ENCODE measurements at regions of chr5 and their contacts with region 1.

Region 1: DNA sequence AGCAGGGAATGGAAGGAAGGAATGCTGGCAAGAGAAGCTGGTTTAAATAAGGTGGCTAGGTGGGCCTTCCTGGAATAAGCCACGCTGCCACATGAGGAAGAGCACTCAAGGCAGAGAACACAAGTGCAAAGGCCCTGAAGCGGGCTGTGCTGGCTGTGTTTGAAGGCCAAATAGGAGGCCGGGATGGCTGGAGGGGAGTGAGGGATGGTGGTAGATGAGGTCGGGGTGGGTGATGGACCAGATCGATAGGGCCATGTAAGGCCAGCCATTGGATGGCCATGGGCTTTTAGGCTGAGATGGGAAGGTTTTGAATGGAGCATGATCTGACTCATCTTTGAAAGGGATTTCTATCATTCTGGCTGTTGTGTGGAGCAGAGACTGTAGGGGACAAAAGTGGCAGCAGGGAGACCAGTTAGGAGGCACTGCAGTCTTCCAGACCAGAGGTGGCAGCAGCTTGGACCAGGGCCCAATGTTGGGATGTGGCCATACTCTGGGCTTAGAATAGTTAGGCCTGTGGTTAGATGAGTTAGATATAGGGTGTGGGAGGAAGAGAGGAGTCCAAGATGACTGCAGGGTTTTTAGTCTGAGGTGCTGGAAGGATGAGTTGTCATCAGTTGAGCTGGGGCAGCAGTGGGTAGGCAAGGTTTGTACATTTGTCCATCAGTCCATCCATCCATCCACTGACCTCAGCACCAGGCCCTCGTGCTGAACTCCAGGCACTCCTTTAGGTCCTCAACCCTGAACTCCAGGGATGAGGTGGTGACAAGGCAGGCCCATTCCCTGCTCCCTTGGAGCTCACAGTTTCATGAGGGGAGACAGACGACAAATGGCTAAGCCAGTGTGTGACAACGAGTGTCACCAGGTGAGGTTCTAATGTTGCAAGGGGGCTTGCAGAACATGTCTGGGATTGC is 30.3 kb downstream of the NDST1 start:
- DNase-seq: no peak
- ATAC-seq: no peak
- H3K4me3 ChIP-seq: no peak overlapping the region
- H3K27ac ChIP-seq: no peak overlapping the region
- H3K4me1 ChIP-seq: no peaks in the 10 kb centered on the region
- H3K27me3 ChIP-seq: no peaks in the 10 kb centered on the region
- CTCF ChIP-seq: no peak

Region 2: DNA sequence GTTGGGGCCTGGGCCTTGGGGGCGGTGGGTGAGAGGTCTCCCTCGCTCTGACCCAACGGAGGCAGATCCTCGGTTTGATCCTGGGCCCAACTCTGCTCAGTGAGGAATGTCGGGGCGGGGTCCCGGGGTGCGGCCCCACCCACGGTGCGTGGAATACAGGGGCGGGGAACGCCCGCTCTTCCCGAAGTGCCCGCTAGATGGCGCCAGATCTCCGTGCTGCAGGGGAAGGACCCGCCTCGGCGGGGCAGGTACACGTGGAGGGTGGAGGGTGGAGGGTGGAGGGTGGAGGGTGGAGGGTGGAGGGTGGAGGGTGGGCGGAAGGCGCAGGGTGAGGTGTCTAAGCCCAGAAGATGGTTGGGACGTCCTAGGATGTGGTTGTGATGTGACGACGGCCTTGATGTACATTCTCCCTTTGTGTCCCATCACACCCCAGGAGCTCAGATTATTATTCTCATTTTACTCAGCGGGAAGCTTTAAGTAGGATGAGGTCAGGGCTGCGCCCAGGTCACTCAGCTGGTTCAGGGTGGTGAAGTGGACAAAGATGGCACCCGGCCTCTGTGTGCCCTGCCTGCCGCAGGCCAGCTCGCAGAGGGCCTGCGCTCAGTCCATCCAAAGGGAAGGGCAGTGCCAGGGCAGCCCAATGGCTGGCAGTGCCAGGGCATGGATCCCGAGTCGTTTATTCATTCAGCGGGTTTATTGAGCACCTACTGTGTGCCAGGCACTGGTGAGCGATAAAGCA is 79.3 kb before region 1 on chr5:
- intact Hi-C with region 1: loop called in 2 of 3 experiments (anchors 5 kb)
- DNase-seq: peak; percentile 61 to 95 (median 86)
- ATAC-seq: peak; percentile 97 to 99 (median 98)
- H3K4me3 ChIP-seq: peak overlapping the region in 1 of 4 donors; percentile 27
- H3K27ac ChIP-seq: no peak overlapping the region
- H3K4me1 ChIP-seq: no peaks in the 10 kb centered on the region
- H3K27me3 ChIP-seq: no peaks in the 10 kb centered on the region
- CTCF ChIP-seq: peak; percentile 69 to 85 (median 72)

Region 3: DNA sequence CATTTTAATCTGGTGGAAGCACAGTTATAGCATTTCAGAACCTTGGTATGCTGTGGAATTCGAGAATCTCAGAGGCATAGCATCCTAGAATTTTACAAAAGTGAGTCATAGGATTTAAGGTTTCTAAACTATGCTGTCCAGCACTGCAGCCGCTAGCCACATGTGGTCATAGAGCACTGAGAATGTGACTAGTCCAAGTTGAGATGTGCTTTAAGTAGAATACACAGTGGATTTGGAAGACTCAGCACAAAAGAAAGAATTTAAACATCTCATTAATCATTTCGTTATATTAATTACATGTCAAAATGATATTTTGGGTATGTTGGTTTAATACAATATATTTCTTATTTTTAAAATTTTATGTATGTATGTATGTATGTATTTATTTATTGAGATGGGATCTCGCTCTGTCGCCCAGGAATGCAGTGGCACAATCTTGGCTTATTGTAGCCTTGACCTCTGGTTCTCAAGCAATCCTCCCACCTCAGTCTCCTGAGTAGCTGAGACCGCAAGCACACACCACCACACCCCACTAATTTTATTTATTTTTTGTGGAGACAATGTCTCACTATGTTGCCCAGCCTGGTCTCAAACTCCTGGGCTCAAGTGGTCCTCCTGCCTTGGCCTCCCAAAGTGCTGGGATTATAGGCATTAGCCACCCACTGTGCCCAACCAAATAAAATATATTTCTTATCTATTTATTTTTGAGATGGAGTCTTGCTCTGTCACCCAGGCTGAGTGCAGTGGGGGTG is 68.4 kb before region 1 on chr5:
- intact Hi-C with region 1: loop called in 1 of 3 experiments (anchors 5 kb)
- DNase-seq: no peak
- ATAC-seq: peak in 2 of 4 donors; percentile 43 to 59
- H3K4me3 ChIP-seq: no peak overlapping the region
- H3K27ac ChIP-seq: no peak overlapping the region
- H3K4me1 ChIP-seq: no peaks in the 10 kb centered on the region
- H3K27me3 ChIP-seq: no peaks in the 10 kb centered on the region
- CTCF ChIP-seq: no peak